Adrenal gland (tissue), 19 donors: ENCODE measurements at regions of chr6 and their contacts with region 1.

Region 1: DNA sequence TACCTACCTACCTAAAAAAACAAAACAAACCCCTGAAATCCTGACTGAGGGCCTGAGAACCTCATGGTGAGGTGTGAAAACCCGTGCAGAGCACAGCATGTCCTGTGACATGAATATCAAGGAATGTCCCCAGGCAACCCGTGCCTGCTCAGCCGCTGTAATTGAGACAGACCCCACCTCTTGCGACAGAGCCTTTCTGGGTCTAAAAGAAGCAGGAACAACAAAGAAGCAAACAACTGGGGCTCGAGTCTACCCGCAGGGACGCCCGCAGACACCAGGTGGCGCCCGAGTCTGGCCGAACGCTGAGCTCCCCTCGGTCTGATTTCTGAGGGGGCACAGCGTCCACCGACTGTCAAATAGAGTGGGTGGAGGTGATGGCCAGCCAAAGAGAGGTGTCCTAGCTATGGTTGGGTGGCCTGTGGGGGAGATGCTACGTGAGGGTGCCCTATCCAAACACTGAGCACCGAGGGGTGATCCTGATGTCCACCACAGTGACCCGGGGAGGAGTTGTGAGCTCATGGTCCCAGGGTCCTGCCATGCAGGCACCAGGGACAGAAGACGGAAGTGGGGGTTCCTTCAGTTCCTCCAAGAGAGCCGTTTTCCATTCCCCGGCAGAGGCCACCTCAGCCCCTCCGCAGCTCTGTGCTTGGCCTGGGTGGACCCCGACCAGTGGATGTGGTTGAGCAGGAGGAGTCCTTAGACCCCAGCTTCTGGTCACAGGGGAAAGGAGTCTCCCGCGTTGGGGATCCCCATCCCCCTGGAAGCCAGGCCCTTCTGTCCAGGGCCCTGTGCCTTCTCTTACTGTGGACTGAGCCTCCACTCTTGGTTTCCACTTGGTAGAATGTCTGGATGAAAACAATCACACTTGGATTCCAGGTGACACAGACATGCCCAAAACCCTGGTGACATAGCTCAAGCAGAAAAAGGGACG is 268.2 kb downstream of the CDC5L start:
- DNase-seq: peak; percentile 67 to 89 (median 74)
- H3K4me3 ChIP-seq: no peak overlapping the region
- H3K27ac ChIP-seq: no peak overlapping the region
- H3K4me1 ChIP-seq: peaks cover 0 to 6% of the 10 kb centered on the region in 2 donors
- H3K27me3 ChIP-seq: no peaks in the 10 kb centered on the region
- CTCF ChIP-seq: peak; percentile 80 to 95 (median 93)
- POLR2A ChIP-seq: no peak

Region 2: DNA sequence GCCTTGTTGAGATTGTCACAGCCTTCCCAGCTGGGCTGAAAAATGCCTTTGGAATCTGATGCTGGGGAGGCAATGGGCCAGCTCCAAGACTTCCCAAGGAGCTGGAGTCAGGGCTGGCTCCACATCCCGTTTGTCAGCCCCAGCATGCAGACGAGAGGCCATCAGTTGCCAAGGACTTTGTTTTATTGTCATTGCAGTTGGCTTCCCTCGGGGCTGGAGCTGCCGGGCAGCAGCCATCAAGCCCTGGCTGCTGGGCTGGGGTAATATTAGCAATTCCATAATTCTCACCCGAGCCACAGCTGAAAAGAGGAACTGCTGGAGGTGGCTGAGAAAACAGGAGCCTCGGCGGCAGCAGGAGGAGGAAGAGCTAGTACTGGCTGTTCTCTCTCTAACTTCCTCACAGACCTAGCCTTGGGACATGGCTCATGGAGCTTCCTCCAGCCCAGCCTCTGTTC is 85.7 kb before region 1 on chr6:
- intact Hi-C with region 1: no loop called
- DNase-seq: peak; percentile 17 to 67 (median 34)
- H3K4me3 ChIP-seq: no peak overlapping the region
- H3K27ac ChIP-seq: peak overlapping the region in 2 of 5 donors; percentile 11 to 53
- H3K4me1 ChIP-seq: peaks cover 5 to 11% of the 10 kb centered on the region in 2 donors
- H3K27me3 ChIP-seq: no peaks in the 10 kb centered on the region
- CTCF ChIP-seq: no peak
- POLR2A ChIP-seq: no peak

Region 3: DNA sequence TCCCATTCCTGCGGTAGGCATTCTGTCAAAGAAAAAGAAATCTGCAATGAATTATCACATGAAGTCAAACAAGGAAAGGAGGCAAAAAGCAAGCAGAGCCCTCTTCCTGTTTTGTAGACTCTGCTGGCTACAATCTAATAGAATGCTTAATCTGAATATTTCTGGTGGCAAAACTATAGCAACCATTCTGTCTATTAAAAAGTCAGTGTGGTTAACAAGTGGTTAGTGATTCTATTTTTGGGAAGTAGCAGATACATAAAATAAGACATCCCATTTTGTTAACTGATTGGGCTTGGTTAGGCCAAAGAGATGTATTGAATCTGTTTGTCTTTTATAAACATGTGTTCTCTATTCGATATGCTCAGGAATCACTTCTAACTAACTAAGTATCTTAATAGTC is 174.2 kb after region 1 on chr6:
- intact Hi-C with region 1: no loop called
- DNase-seq: no peak
- H3K4me3 ChIP-seq: no peak overlapping the region
- H3K27ac ChIP-seq: no peak overlapping the region
- H3K4me1 ChIP-seq: peaks cover 0 to 34% of the 10 kb centered on the region in 2 donors
- H3K27me3 ChIP-seq: no peaks in the 10 kb centered on the region
- CTCF ChIP-seq: no peak
- POLR2A ChIP-seq: no peak

Region 4: DNA sequence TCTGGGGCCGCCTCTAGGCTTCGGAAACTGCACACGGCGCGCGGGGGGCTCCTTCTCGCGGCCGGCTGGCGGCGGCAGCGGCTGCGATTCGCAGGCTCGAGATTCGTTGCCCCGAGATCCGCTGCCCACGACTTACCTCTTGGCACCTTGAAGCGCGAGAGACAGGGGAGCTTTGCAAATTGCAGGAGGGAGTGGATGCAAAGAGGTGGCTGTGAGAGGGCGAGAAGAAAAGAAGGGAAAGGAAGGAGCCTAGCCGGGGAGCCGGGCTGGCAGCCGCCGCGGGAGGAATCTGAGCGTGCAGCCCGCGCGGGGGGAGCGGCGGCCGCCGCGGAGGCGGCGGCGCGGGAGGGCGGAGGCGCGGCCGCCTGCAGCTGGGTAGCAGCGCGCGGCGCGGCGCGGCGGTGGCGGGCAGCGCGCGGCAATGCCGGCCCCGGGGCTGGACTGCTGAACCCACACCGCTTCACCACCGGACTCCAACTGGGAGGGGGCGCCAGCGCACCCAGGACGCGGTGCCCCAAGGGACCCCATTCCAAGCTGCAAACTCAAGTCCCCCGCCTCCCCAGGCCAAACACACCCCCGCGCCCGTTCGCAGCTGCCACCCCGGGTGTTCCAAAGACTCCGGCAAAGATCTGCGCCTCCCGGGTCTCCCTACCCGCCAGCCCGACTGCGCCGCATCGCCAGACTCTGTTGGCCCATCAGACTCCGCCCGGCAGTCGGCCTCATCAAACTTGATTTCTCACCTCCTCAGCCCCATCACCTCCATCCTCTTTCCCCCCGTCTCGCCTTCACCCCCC is 766.2 kb after region 1 on chr6:
- intact Hi-C with region 1: loop called in 1 of 2 experiments (anchors 10 kb)
- DNase-seq: peak; percentile 27 to 67 (median 49)
- H3K4me3 ChIP-seq: peak overlapping the region in 2 of 4 donors; percentile 53 to 66
- H3K27ac ChIP-seq: peak overlapping the region in 2 of 5 donors; percentile 67 to 76
- H3K4me1 ChIP-seq: peaks cover 16 to 28% of the 10 kb centered on the region in 2 donors
- H3K27me3 ChIP-seq: peaks cover 59% of the 10 kb centered on the region
- CTCF ChIP-seq: no peak
- POLR2A ChIP-seq: no peak

Region 5: GRCh38 chr6:45714741-45715507 is 1059.2 kb after region 1 on chr6:
- intact Hi-C with region 1: loop called (anchors 2 to 10 kb)
- DNase-seq: peak; percentile 41 to 79 (median 56)
- H3K4me3 ChIP-seq: no peak overlapping the region
- H3K27ac ChIP-seq: no peak overlapping the region
- H3K4me1 ChIP-seq: no peaks in the 10 kb centered on the region
- H3K27me3 ChIP-seq: no peaks in the 10 kb centered on the region
- CTCF ChIP-seq: peak; percentile 56 to 84 (median 78)
- POLR2A ChIP-seq: no peak